ENCODE measurements at regions of chr20 and their contacts with region 1.

Region 1: GRCh38 chr20:62623488-62624324 is 18.6 kb upstream of the SLCO4A1 start:
- DNase-seq: peak; percentile 97
- H3K4me3 Mint-ChIP-seq: peak overlapping the region; percentile 44
- H3K27ac Mint-ChIP-seq: peak overlapping the region; percentile 93
- H3K4me1 Mint-ChIP-seq: peaks cover 19% of the 10 kb centered on the region
- H3K27me3 Mint-ChIP-seq: no peaks in the 10 kb centered on the region
- CTCF ChIP-seq: no peak

Region 2: DNA sequence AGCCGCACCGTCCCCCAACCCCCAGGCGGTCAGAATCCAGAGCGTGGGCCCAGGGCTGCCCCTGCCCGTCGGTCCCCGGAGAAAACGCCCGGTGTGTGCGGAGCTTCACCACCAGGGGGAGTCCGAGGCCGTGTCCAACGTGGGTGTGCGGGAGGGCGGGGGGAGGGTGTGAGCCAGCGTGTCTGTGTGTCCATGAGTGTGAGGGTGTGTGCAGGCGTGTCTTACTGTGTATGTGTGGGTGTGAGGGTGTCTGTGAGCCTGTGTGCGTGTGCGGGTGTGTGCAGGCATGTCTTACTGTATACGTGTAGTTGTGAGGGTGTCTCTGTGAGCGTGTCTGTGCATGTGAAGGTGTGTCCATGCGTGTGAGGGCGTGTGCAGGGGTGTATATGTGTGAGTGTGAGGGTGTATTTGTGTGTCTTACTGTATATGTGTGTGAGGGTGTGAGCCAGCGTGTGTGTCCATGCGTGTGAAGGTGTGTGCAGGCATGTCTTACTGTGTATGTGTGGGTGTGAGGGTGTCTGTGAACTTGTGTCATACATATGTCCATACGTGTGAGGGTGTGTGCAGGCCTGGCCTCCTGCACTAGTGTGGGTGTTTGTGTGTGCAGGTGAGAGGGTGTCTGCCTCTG is 123.4 kb before region 1 on chr20:
- CTCF ChIA-PET with region 1: interaction called, 15 read pairs
- POLR2A ChIA-PET with region 1: interaction called, 3 read pairs
- intact Hi-C with region 1: no loop called
- DNase-seq: peak; percentile 63
- H3K4me3 Mint-ChIP-seq: no peak overlapping the region
- H3K27ac Mint-ChIP-seq: no peak overlapping the region
- H3K4me1 Mint-ChIP-seq: peaks cover 19% of the 10 kb centered on the region
- H3K27me3 Mint-ChIP-seq: no peaks in the 10 kb centered on the region
- CTCF ChIP-seq: peak; percentile 83

Region 3: DNA sequence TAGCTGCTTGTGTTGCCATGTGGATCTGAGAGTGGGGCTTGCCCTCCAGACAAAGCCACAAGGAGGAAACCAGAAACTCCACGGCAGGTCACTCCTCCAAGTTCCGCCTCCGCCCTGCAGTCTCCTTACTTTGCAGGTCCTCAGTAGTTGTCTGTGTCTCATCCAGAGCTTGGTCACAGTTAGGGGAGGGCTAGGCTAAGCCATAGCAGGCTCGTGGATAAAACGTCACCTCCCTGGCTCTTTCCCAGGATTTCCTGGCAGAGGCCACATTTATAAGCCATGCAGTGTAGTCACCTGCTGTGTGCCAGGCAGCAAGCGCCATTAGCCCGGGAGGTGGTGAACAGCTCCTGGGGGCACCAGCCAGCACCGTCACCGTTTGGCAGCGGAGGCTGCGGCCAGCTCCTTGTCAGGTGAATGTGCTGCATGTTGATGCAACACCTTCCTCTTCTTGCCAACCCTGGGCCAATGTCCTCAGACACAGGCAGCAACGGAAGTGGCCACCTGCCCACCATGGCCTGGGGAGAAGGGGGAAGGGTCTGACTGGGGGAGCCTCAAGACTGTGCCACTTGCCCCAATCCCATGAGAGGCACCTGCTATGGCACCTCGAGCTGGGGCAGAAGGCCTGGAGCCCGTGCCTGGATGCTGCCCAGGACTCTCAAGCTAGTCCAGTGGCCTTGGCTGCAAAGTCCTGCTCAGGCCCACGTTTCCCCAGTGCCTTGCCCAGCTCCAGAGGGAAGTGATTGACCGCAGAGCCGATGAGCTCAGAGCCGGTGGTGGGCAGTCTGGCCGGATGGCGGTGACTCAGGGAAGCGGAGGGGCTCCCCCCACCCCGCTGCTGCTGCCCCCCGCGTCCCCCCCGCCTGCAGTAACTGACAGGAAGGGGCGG is 20.4 kb before region 1 on chr20:
- CTCF ChIA-PET with region 1: interaction called, 4 read pairs
- POLR2A ChIA-PET with region 1: interaction called, 39 read pairs
- intact Hi-C with region 1: no loop called
- DNase-seq: peak; percentile 93
- H3K4me3 Mint-ChIP-seq: peak overlapping the region; percentile 56
- H3K27ac Mint-ChIP-seq: peak overlapping the region; percentile 13
- H3K4me1 Mint-ChIP-seq: peaks cover 41% of the 10 kb centered on the region
- H3K27me3 Mint-ChIP-seq: no peaks in the 10 kb centered on the region
- CTCF ChIP-seq: no peak

Region 4: DNA sequence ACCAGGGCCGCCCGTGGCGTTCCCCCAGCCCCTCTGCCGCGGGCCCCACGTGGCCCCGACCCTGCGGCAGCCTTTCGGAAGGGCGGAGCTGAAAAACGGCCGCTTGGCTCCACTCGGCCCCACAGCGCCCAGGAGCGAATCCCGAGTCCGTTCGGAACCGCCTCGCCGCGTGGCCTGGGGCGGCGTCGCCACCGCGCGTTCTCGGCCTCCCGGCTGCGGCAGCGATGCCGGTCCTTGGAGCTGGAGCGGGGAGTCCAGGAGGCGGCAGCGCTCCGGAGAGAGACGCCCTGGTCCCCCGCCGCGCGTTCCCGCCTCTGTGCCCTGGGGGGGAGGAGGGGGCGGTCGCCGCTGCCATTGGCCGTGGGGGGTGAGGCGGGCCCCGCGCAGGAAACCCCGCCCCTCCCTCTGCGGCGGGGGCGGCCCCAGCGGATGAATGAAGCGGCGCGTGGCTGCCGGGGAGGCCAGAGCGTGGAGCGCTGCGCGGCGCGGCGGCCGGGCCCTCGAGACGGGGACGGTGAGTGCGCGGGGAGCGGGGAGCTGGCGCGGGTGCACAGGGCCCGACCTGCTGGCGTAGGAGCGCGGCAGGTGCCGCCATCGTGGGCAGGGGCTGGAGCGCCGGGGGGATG is 18.4 kb after region 1 on chr20 and contains the start of gene SLCO4A1:
- CTCF ChIA-PET with region 1: no interaction called
- POLR2A ChIA-PET with region 1: interaction called, 100 read pairs
- intact Hi-C with region 1: no loop called
- DNase-seq: peak; percentile 80
- H3K4me3 Mint-ChIP-seq: peak within 1 kb of the TSS; percentile 72
- H3K27ac Mint-ChIP-seq: no peak within 1 kb of the TSS
- H3K4me1 Mint-ChIP-seq: peaks cover 7% of the 10 kb centered on the region
- H3K27me3 Mint-ChIP-seq: no peaks in the 10 kb centered on the region
- CTCF ChIP-seq: no peak
- total RNA-seq, gene SLCO4A1: 23.8 and 27.0 TPM in 2 replicates

Region 5: GRCh38 chr20:62772990-62773844 is 149.5 kb after region 1 on chr20:
- CTCF ChIA-PET with region 1: no interaction called
- POLR2A ChIA-PET with region 1: interaction called, 10 read pairs
- intact Hi-C with region 1: no loop called
- DNase-seq: peak; percentile 96
- H3K4me3 Mint-ChIP-seq: peak overlapping the region; percentile 58
- H3K27ac Mint-ChIP-seq: peak overlapping the region; percentile 84
- H3K4me1 Mint-ChIP-seq: peaks cover 41% of the 10 kb centered on the region
- H3K27me3 Mint-ChIP-seq: no peaks in the 10 kb centered on the region
- CTCF ChIP-seq: no peak